Activated CD8-positive, alpha-beta memory T cell treated with anti-CD3 and anti-CD28 coated beads, Interleukin-2, amount 10 ng/mL, durations not matched to agents 7 days and 5 days (primary cell): ENCODE measurements at regions of chr5 and their contacts with region 1.

Region 1: DNA sequence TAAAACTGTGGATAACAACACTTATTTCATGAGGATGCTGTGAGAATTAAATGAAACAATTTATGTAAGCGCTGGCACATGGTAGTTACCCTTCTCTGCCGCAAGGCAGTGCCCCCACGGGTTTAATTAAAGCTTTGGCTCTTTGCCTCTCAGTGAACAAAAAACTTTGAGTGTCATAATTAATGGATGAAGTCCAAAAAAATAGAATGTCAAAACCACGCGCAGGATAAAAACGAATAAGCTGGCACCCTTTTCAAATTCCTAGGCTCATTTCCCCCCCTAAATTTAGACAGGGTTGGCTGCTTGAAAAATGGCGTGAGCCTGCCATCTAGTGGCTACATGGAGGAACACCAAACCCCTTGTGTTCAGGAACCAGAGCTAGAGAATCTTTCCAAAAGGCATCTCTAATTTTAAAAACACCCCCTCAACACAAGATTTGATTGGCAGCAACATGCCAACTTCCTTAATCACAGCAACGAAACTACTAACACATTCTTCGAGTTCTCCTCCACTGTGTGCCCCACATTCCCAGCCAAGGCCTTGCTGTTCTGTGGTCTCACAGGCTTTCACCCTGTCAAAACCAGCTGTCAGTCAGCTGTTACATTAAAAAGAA is 29.0 kb upstream of the CCNG1 start:
- DNase-seq: peak; percentile 68
- ATAC-seq: peak; percentile 85
- H3K4me3 Mint-ChIP-seq: no peak overlapping the region
- H3K27ac Mint-ChIP-seq: no peak overlapping the region
- H3K4me1 Mint-ChIP-seq: peaks cover 12% of the 10 kb centered on the region
- H3K27me3 Mint-ChIP-seq: peaks cover 2% of the 10 kb centered on the region

Region 2: GRCh38 chr5:161544350-161544765 is 1864.1 kb before region 1 on chr5:
- CTCF ChIA-PET with region 1: interaction called, 17 read pairs
- DNase-seq: no peak
- ATAC-seq: no peak
- H3K4me3 Mint-ChIP-seq: no peak overlapping the region
- H3K27ac Mint-ChIP-seq: no peak overlapping the region
- H3K4me1 Mint-ChIP-seq: peaks cover 12% of the 10 kb centered on the region
- H3K27me3 Mint-ChIP-seq: peaks cover 47% of the 10 kb centered on the region

Region 3: GRCh38 chr5:163306421-163306820 is 102.0 kb before region 1 on chr5:
- CTCF ChIA-PET with region 1: interaction called, 10 read pairs
- DNase-seq: no peak
- ATAC-seq: no peak
- H3K4me3 Mint-ChIP-seq: no peak overlapping the region
- H3K27ac Mint-ChIP-seq: no peak overlapping the region
- H3K4me1 Mint-ChIP-seq: peaks cover 2% of the 10 kb centered on the region
- H3K27me3 Mint-ChIP-seq: peaks cover 7% of the 10 kb centered on the region

Region 4: GRCh38 chr5:163347671-163348070 is 60.7 kb before region 1 on chr5:
- CTCF ChIA-PET with region 1: interaction called, 21 read pairs
- DNase-seq: peak; percentile 66
- ATAC-seq: peak; percentile 49
- H3K4me3 Mint-ChIP-seq: no peak overlapping the region
- H3K27ac Mint-ChIP-seq: no peak overlapping the region
- H3K4me1 Mint-ChIP-seq: no peaks in the 10 kb centered on the region
- H3K27me3 Mint-ChIP-seq: peaks cover 8% of the 10 kb centered on the region

Region 5: GRCh38 chr5:163385271-163385670 is 23.1 kb before region 1 on chr5:
- CTCF ChIA-PET with region 1: no interaction called
- DNase-seq: no peak
- ATAC-seq: no peak
- H3K4me3 Mint-ChIP-seq: no peak overlapping the region
- H3K27ac Mint-ChIP-seq: no peak overlapping the region
- H3K4me1 Mint-ChIP-seq: no peaks in the 10 kb centered on the region
- H3K27me3 Mint-ChIP-seq: no peaks in the 10 kb centered on the region

Region 6: DNA sequence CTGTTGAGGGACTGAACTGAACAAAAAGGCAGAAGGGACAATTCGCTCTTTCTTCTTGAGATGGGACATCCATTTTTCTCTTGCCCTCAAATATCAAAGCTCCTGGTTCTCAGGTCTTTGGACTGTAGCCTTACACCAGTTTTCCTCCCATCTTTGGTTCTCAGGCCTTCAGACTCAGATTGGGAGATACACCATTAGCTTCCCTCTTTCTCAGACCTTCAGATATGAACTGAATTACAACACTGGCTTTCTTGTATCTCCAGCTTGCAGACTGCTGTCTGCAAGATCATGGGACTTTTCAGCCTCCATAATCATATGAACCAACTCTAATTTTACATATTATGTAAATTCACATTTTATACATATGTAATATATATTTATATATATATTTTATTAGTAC is 16.4 kb after region 1 on chr5:
- CTCF ChIA-PET with region 1: interaction called, 13 read pairs
- DNase-seq: no peak
- ATAC-seq: no peak
- H3K4me3 Mint-ChIP-seq: no peak overlapping the region
- H3K27ac Mint-ChIP-seq: no peak overlapping the region
- H3K4me1 Mint-ChIP-seq: peaks cover 7% of the 10 kb centered on the region
- H3K27me3 Mint-ChIP-seq: peaks cover 14% of the 10 kb centered on the region